Aorta (tissue), 5 donors: ENCODE measurements at regions of chr17 and their contacts with region 1.

Region 1: GRCh38 chr17:35566968-35567367 is 6.3 kb upstream of the SLFN14 start:
- DNase-seq: no peak
- ATAC-seq: no peak
- H3K4me3 ChIP-seq: no peak overlapping the region
- H3K27ac ChIP-seq: no peak overlapping the region
- H3K4me1 ChIP-seq: peaks cover 2 to 5% of the 10 kb centered on the region in 2 donors
- H3K27me3 ChIP-seq: no peaks in the 10 kb centered on the region

Region 2: GRCh38 chr17:35587074-35587971 is 20.4 kb after region 1 on chr17 and contains the start of gene AP2B1:
- intact Hi-C with region 1: loop called in 1 of 2 experiments (anchors 1 kb)
- DNase-seq: peak; percentile 94 to 97
- ATAC-seq: peak; percentile 96
- H3K4me3 ChIP-seq: peak within 1 kb of the TSS; percentile 43 to 86
- H3K27ac ChIP-seq: peak within 1 kb of the TSS in 1 of 2 donors; percentile 62
- H3K4me1 ChIP-seq: no peaks in the 10 kb centered on the region
- H3K27me3 ChIP-seq: no peaks in the 10 kb centered on the region
- total RNA-seq, gene AP2B1: 107 to 120 TPM